Adrenal gland (tissue), 19 donors: ENCODE measurements at regions of chr7 and their contacts with region 1.

Region 1: DNA sequence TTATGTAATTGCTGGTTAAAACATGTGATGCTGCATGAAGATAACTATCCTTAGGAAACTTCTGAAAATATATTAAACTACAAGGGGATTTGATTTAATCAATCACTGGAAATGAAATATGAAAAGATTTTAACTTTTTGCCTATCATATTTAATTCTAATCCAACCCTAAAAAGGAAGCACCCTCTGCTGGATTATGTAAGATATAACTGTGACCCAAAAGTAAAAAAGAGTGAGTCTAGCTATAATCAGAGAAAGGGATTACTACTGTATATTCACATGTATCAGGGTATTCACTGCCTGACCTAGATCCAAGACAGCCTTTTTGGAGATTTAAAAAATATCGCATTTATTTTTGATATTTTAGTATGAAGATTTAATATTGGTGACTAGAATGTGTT is 295.5 kb downstream of the MDFIC start:
- DNase-seq: no peak
- H3K4me3 ChIP-seq: no peak overlapping the region
- H3K27ac ChIP-seq: no peak overlapping the region
- H3K4me1 ChIP-seq: no peaks in the 10 kb centered on the region
- H3K27me3 ChIP-seq: no peaks in the 10 kb centered on the region
- CTCF ChIP-seq: peak in 5 of 6 experiments; percentile 25 to 52 (median 46)
- POLR2A ChIP-seq: no peak

Region 2: DNA sequence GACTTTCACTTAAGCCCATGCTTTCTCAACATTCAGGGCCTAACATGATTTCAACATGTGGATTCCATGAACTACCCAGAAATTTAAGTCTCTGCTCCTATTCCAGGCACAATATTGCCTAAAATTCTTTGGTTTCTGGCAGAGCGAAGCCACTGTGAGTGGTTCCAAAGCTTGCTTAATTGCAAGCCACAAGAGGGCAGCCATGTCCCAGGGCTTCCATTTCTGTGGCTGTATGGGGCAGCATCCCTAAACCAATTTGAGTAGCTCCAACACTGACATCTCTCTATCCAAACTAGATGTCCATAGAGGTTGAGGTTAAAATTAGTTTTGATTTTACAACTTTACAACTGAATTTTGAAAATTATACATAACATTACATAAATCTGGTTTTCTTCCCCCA is 351.8 kb before region 1 on chr7:
- intact Hi-C with region 1: loop called (anchors 10 kb)
- DNase-seq: peak; percentile 57 to 79 (median 70)
- H3K4me3 ChIP-seq: no peak overlapping the region
- H3K27ac ChIP-seq: no peak overlapping the region
- H3K4me1 ChIP-seq: no peaks in the 10 kb centered on the region
- H3K27me3 ChIP-seq: no peaks in the 10 kb centered on the region
- CTCF ChIP-seq: peak; percentile 64 to 86 (median 80)
- POLR2A ChIP-seq: no peak

Region 3: DNA sequence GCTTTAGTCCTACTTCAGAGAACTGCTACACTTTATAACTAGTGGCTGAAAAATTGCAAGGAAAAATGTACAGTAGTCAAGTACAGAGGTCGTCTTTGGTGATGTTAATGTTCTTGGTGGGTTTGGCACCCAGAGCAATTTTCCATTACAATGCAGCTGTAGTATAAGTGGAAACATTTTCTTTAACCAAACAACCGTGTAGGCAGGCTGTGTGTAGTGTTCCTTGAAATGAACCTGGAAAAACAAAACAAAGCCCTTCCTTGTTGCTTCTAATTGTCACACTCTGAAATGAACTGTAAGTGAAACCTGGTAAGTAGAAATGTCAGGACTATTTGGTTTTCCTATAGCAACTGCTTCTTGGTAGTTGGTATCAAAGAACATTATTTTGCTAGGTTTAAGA is 38.5 kb before region 1 on chr7:
- intact Hi-C with region 1: no loop called
- DNase-seq: no peak
- H3K4me3 ChIP-seq: no peak overlapping the region
- H3K27ac ChIP-seq: no peak overlapping the region
- H3K4me1 ChIP-seq: no peaks in the 10 kb centered on the region
- H3K27me3 ChIP-seq: no peaks in the 10 kb centered on the region
- CTCF ChIP-seq: no peak
- POLR2A ChIP-seq: no peak